ENCODE measurements at regions of chr14 and their contacts with region 1.

Region 1: GRCh38 chr14:45426670-45427282 is 173.8 kb upstream of the MIS18BP1 start:
- DNase-seq: peak; percentile 12
- ATAC-seq: peak; percentile 74
- H3K4me3 ChIP-seq: no peak overlapping the region
- H3K27ac ChIP-seq: no peak overlapping the region
- H3K4me1 ChIP-seq: no peaks in the 10 kb centered on the region
- H3K27me3 ChIP-seq: no peaks in the 10 kb centered on the region
- CTCF ChIP-seq: peak; percentile 64

Region 2: DNA sequence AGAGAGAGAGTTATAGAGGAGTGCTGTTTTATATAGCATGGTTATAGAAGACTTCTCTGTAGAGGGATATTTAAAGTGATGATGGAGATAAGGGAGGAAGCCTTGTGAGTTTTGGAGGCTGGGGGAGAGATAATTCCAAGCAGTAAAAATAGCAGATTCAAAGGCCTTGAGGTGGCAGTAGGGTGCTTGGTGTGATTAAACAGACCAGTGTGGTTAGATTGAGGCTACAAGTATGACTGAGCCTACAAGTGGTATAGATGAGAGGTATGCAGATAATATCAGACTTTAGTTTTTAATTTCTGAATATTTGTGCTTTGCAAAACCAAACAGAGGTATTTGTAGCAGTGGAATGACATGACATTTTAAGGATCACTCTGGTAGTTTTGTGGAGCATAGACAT is 270.7 kb before region 1 on chr14:
- CTCF ChIA-PET with region 1: no interaction called
- POLR2A ChIA-PET with region 1: no interaction called
- in situ Hi-C with region 1: no loop called
- intact Hi-C with region 1: no loop called
- DNase-seq: no peak
- ATAC-seq: no peak
- H3K4me3 ChIP-seq: no peak overlapping the region
- H3K27ac ChIP-seq: no peak overlapping the region
- H3K4me1 ChIP-seq: no peaks in the 10 kb centered on the region
- H3K27me3 ChIP-seq: no peaks in the 10 kb centered on the region
- CTCF ChIP-seq: no peak

Region 3: DNA sequence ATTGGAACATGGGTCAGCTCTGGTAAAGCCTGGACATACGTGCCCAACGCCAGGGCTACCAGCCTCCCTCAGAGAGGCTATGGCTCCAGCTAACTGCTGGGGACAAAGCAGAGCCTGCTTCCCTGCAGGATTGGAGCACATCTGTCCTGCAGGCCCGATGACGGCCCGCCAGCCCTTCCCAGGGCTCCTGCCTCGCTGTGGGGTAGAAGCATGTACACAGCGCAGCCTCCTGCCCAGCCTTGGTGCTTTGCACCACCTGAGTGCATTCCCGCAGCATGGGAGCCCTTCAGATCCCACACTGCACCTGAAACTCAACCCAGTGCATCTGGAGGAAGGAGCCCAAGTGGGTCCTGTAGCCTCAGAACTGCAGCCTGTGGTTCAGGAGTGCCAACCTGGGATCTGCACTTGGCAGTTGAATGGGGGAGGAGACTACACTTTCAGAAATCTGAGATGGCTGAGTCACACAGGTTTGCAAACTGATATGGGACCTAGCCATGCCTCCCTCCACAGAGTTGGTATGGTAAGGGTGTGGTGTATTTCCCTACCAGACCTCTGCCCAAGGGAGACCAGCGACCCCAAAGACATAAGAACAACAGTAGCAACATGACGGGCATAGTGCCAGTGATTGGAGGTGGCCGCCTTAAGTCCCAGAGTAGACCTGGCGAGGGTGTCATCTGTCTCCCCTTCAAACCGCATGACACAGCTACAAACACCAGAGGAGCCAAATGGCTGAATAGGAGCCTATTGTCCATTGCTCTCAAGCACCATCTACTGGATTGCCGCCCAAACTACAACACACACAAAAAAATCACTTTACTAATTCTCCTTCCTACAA is 100.2 kb after region 1 on chr14:
- CTCF ChIA-PET with region 1: no interaction called
- POLR2A ChIA-PET with region 1: no interaction called
- in situ Hi-C with region 1: no loop called
- intact Hi-C with region 1: loop called (anchors 2 kb)
- DNase-seq: no peak
- ATAC-seq: no peak
- H3K4me3 ChIP-seq: no peak overlapping the region
- H3K27ac ChIP-seq: no peak overlapping the region
- H3K4me1 ChIP-seq: no peaks in the 10 kb centered on the region
- H3K27me3 ChIP-seq: no peaks in the 10 kb centered on the region
- CTCF ChIP-seq: peak; percentile 59

Region 4: GRCh38 chr14:45810152-45810872 is 383.5 kb after region 1 on chr14:
- CTCF ChIA-PET with region 1: no interaction called
- POLR2A ChIA-PET with region 1: no interaction called
- in situ Hi-C with region 1: no loop called
- intact Hi-C with region 1: loop called (anchors 10 kb)
- DNase-seq: no peak
- ATAC-seq: no peak
- H3K4me3 ChIP-seq: no peak overlapping the region
- H3K27ac ChIP-seq: no peak overlapping the region
- H3K4me1 ChIP-seq: no peaks in the 10 kb centered on the region
- H3K27me3 ChIP-seq: no peaks in the 10 kb centered on the region
- CTCF ChIP-seq: peak; percentile 8; the same call in 1 of the 2 replicates